ENCODE measurements at regions of chr1 and their contacts with region 1.

Region 1: GRCh38 chr1:155250633-155251449 is 4.4 kb downstream of the ENTREP3 start:
- DNase-seq: peak; percentile 95 to 98 (median 97)
- H3K4me3 ChIP-seq: peak overlapping the region; percentile 32 to 90 (median 71)
- H3K27ac ChIP-seq: peak overlapping the region in 1 of 2 experiments; percentile 66
- H3K4me1 ChIP-seq: peaks cover 0 to 44% (median 30%) of the 10 kb centered on the region in 4 experiments
- H3K27me3 ChIP-seq: no peaks in the 10 kb centered on the region

Region 2: DNA sequence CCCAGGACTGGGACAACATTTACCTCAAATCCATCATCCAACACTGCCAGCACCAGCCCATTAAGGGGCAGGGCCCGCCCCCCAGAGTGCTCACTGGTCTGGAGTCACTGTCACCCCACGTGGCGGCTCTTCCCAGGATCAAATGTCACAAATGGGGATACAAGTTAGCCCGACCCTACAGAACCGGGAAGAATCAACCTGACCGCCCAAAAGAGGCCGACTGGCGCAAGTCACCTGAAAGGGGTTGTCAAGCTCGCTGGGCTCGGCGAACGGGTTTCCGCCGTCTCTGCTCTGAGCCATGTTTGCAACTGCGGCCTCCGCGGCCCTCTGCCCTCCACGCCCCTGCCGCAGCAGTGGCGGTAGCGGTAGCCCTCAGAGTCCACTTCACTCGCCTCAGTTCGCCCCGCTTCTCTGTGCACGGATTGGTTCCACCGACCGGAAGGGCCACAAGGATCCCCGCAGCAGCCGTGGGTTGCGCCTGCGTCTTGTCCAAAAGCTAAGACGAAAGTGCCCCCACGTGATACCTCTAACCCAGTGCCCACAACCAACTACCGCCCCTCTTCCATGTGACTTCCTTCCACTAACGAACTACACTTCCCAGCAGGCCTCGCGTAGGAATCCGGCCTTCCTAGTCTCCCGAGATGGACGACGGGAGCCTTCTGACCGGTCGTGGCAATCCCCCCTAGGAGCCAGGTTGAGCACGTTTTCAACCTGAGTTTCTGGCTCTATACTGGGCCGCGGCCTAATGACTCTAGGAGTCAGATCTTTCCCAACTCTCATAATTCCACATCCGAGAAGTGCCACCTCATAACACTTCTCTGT is 11.2 kb after region 1 on chr1 and contains the start of gene SCAMP3:
- CTCF ChIA-PET with region 1: interaction called, 65 read pairs
- POLR2A ChIA-PET with region 1: interaction called, 7 read pairs
- DNase-seq: peak; percentile 91 to 93 (median 91)
- H3K4me3 ChIP-seq: peak within 1 kb of the TSS; percentile 89 to 97 (median 97)
- H3K27ac ChIP-seq: peak within 1 kb of the TSS; percentile 68 to 82
- H3K4me1 ChIP-seq: peaks cover 2 to 19% (median 15%) of the 10 kb centered on the region in 4 experiments
- H3K27me3 ChIP-seq: no peaks in the 10 kb centered on the region

Region 3: GRCh38 chr1:155267373-155267772 is 16.5 kb after region 1 on chr1:
- CTCF ChIA-PET with region 1: interaction called, 65 read pairs
- POLR2A ChIA-PET with region 1: interaction called, 7 read pairs
- DNase-seq: no peak
- H3K4me3 ChIP-seq: no peak overlapping the region
- H3K27ac ChIP-seq: no peak overlapping the region
- H3K4me1 ChIP-seq: peaks cover under 1 to 10% (median 4%) of the 10 kb centered on the region in 4 experiments
- H3K27me3 ChIP-seq: no peaks in the 10 kb centered on the region

Region 4: GRCh38 chr1:155277070-155277895 is 26.4 kb after region 1 on chr1 and contains the start of gene HCN3:
- CTCF ChIA-PET with region 1: interaction called, 36 read pairs
- POLR2A ChIA-PET with region 1: interaction called, 3 read pairs
- DNase-seq: peak; percentile 93 to 95 (median 93)
- H3K4me3 ChIP-seq: peak within 1 kb of the TSS; percentile 34 to 85 (median 78)
- H3K27ac ChIP-seq: no peak within 1 kb of the TSS
- H3K4me1 ChIP-seq: peaks cover 11 to 32% (median 28%) of the 10 kb centered on the region in 4 experiments
- H3K27me3 ChIP-seq: no peaks in the 10 kb centered on the region

Region 5: DNA sequence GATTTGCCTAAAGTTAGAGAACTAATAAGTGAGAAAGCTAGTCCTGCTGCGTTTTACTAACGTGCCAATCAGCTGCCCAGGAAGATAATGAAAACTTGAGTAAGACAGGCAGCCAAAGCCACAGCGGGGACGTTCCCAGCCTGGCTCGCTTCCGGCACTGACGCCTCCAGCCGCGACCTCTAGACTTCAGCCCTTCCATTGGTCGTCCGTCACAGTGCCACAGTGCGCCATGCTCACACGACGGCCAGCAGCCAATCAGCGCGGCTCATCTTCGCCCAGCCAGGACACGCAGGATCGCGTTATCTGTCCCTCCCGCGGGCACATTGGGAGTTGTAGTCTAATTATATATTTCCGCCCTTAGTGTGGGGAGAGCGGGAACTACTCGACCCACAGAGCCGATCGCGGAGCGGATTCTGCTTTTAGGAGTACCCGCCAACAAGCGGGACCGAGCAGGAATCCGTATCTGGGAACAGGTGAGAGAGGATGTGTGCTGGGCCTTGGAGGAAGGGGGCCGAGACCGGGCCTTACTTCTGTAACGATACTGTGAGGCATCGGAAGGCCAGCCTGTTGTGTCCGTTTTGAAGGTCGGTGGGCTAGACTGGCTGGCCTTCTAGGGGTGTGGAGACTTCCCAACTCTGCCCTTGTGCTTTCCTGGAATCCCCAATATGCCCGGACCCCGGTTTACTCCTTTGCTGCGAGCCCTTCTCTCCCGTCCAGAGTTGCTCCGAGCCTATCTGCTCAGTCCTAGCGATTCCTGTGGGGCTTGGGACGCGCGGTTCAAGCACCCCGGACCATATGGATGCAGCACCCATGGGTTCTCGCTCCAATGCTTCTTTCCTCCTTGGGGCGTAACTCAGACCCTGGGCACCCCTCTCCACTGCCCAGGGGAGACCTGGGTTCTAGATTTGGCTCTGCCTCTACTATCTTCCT is 57.9 kb after region 1 on chr1 and contains the start of gene FDPS:
- CTCF ChIA-PET with region 1: interaction called, 70 read pairs
- POLR2A ChIA-PET with region 1: interaction called, 6 read pairs
- DNase-seq: peak; percentile 99 to 100 (median 100)
- H3K4me3 ChIP-seq: peak within 1 kb of the TSS; percentile 83 to 97 (median 93)
- H3K27ac ChIP-seq: peak within 1 kb of the TSS; percentile 75 to 95
- H3K4me1 ChIP-seq: peaks cover 4 to 39% (median 21%) of the 10 kb centered on the region in 4 experiments
- H3K27me3 ChIP-seq: no peaks in the 10 kb centered on the region

Region 6: DNA sequence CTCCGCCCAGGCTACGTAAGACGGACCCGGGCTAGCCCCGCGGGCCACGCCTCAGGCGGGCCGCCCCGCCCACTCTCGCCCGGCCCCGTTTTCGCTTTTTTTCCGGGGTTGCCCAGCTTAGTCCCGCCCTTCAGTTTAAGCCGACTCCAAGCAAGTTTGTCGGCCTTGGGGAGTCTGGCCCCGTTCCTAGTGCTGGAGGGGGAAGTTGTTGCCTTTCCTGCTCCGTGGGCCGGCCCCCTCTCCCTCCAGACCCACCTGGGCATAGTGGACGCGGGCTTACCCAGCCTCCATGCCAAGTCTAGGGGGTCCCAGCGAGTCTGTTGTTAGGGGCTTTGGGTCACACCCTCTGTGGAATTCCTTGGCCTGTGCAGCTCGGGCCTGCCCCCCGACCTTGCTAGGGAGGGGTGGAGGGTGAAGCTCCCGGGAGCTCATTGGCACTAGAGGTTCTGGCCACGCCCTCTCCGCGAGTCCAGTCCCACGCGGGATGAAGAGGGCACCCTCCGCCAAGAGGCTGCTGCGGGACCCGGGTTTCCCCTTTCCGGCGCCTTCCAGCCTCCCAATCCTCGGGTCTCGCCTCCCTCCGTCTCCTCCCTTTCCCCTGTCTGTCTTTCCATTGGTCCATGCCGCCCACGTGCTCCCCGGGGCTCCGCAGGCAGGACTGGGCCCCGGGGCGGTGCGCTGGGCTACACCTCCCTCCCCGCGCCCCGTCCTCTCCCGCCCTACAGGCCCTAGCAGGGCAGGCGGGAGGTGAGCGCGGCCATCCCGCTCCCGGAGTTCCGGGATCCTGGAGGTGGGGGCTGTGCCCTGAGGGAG is 73.2 kb after region 1 on chr1:
- CTCF ChIA-PET with region 1: interaction called, 165 read pairs
- POLR2A ChIA-PET with region 1: interaction called, 5 read pairs
- DNase-seq: peak; percentile 88 to 90 (median 90)
- H3K4me3 ChIP-seq: peak overlapping the region; percentile 69 to 92 (median 85)
- H3K27ac ChIP-seq: peak overlapping the region; percentile 40 to 86
- H3K4me1 ChIP-seq: peaks cover 3 to 62% (median 55%) of the 10 kb centered on the region in 4 experiments
- H3K27me3 ChIP-seq: no peaks in the 10 kb centered on the region

Measured in common myeloid progenitor, CD34-positive (primary cell).